Posterior vena cava (tissue), 2 donors: ENCODE measurements at regions of chr1 and their contacts with region 1.

Region 1: GRCh38 chr1:201739492-201740085 is 89.4 kb upstream of the IPO9 start:
- DNase-seq: peak; percentile 85

Region 2: DNA sequence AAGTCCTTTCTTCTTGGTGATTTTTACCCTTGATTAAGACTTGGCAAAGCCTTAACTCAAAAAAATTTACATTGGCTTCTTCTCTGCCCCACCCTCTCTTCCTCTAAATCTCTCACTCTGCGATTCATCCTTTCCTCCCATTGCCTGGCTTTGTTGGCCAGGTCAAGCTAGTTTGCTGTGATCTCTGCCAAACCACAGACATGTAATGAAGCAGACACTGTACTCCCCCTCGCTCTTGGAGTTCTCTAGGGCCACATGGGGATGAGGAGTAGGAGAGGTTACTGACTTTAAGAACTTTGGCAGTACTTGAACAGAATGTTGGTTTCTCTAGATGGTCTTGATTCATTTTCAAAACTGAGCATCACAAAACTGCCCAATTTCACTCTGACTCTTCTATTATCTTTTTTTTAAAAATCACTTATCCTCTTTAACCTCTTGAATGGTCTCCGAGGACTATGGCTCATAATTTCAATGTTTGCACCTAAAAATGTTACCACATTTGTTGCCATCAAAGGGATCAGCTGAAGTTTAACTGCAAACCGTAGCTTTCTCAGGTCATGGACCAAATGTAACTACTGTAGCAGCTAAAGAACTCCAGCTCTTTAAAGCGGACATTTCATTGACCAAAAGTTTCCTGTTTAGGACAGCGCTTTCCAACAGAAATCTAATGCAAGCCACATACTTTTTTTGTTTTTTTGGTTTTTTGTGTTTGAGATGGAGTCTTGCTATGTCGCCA is 26.7 kb after region 1 on chr1:
- intact Hi-C with region 1: loop called in 1 of 2 experiments (anchors 2 kb)
- DNase-seq: no peak

Region 3: DNA sequence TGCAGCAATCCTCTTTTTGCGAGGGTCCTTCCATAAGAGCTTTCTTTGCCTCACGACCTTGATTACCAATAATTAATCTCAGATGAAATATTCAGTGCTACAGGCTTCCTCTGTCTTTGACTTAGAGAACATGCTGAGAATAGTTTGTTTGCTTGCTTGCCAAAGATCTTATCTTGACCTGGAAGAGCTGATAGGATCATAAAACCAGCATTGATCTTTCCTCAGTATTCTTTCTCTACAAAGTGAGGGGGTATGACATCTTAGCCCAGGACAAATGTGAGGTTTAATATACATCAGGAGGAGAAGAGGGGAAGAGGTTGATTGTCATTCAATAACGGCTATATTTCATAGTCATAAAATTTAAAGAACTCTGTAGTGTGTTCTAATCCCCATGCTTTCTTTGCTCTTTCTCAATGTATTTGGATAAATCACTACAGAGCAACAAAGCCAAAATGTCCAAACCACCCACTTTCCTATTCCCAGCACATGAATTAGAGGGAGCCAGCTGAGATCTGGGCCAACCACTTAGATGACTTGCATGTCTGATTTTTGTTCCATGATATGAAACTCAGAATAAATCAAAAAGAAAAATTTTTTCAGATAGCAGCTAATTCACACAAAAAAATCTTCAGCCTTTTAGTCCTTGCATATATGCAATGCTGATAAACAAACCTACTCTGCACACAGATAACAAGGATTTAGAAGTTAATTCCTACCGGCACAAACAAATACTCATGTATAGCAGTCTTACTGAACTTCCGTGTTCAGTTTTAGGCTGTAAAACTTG is 38.9 kb after region 1 on chr1:
- intact Hi-C with region 1: loop called in 1 of 2 experiments (anchors 5 kb)
- DNase-seq: no peak

Region 4: GRCh38 chr1:201792534-201793305 is 53.1 kb after region 1 on chr1:
- intact Hi-C with region 1: loop called in 1 of 2 experiments (anchors 5 kb)
- DNase-seq: no peak